GM12878 (cell line): ENCODE measurements at regions of chr1 and their contacts with region 1.

Region 1: GRCh38 chr1:62725255-62725654 is 37.1 kb upstream of the DOCK7 start:
- DNase-seq: peak; percentile 19
- ATAC-seq: peak; percentile 42
- H3K4me3 ChIP-seq: 0 out of 2 replicates have a peak overlapping the region, but pooled peaks have one; percentile 7
- H3K27ac ChIP-seq: no peak overlapping the region
- H3K4me1 ChIP-seq: 0 out of 2 replicates have a peak, but pooled peaks cover 5% of the 10 kb centered on the region
- H3K27me3 ChIP-seq: no peaks in the 10 kb centered on the region
- CTCF ChIP-seq: no peak
- EP300 ChIP-seq: no peak
- POLR2A ChIP-seq: no peak
- RAD21 ChIP-seq: no peak

Region 2: DNA sequence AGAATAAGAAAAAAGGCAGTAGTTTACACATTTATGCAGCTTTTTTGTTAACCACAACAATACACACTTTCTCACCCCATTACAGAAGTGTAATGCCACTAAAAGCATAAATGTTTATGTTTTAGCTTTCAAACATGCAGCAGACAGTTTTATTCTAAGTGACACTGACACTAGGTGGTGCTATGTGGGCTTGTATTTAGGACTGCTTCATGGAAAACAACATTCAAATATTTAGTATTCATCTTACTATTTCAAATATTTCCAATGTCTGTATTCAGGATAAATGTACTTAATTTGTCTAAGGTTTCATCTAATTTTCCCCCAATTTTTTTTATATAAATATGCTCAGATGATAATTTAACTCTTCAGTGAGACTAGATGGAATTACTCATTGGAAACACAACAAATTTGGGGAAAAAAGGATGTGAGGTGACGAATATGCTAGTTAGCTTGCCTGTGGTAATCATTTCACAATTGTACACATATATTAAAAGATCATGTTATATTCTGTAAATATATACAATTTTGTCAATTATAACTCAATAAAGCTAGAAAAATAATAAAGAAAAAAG is 217.0 kb before region 1 on chr1:
- CTCF ChIA-PET with region 1: interaction called, 6 read pairs
- POLR2A ChIA-PET with region 1: no interaction called
- RAD21 ChIA-PET with region 1: interaction called, 12 read pairs
- SMC1A ChIA-PET with region 1: interaction called, 9 read pairs
- in situ Hi-C with region 1: no loop called
- intact Hi-C with region 1: no loop called
- DNase-seq: peak; percentile 9
- ATAC-seq: peak; percentile 68
- H3K4me3 ChIP-seq: no peak overlapping the region
- H3K27ac ChIP-seq: no peak overlapping the region
- H3K4me1 ChIP-seq: no peaks in the 10 kb centered on the region
- H3K27me3 ChIP-seq: no peaks in the 10 kb centered on the region
- CTCF ChIP-seq: peak; percentile 58 to 68 (median 60)
- EP300 ChIP-seq: no peak
- POLR2A ChIP-seq: no peak
- RAD21 ChIP-seq: peak; percentile 88

Region 3: DNA sequence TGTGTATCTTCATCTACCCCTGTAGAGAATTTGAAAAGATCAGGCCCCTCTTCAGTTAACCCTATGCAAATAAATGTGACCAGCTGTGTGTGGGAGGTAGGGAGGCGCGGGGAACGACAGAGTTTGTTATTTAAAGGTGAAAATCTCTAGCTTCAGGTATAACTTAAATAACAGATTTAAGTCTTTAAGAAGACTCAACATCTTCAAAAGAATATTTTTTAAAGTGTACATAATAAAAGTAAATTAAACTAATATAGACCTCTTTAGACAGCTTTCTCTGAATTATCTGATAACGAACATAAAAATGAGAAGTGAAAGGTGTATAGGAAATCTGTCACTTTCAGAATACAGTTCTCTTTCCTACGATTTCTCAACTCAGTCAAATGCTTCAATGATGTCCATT is 111.9 kb before region 1 on chr1:
- CTCF ChIA-PET with region 1: interaction called, 3 read pairs
- POLR2A ChIA-PET with region 1: no interaction called
- RAD21 ChIA-PET with region 1: interaction called, 9 read pairs
- SMC1A ChIA-PET with region 1: interaction called, 24 read pairs
- in situ Hi-C with region 1: no loop called
- intact Hi-C with region 1: no loop called
- DNase-seq: peak; percentile 27
- ATAC-seq: peak; percentile 98
- H3K4me3 ChIP-seq: 0 out of 2 replicates have a peak overlapping the region, but pooled peaks have one; percentile 4
- H3K27ac ChIP-seq: peak overlapping the region; percentile 66
- H3K4me1 ChIP-seq: peaks cover 11% of the 10 kb centered on the region
- H3K27me3 ChIP-seq: no peaks in the 10 kb centered on the region
- CTCF ChIP-seq: no peak
- EP300 ChIP-seq: peak; percentile 31 to 75; a peak in 3 of 4 replicates
- POLR2A ChIP-seq: no peak
- RAD21 ChIP-seq: no peak

Region 4: DNA sequence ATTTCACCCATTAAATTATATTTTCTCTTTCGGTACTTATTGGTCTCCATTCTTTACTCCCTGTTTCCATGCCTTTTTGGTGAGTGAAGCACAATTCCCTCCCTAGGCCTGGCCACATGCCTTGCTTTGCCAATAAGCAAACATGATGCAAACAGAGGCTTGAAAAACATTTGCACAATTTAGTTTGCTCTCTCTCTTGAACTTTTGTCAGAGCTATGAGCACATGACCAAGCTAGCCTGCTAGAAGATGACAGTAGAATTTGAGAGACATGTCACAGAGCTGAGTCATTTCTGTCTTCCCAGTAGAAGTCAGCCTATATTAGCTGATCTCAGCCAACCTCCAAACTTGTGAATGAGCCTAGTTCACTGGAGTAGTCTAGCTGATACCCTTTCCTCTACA is 103.3 kb before region 1 on chr1:
- CTCF ChIA-PET with region 1: interaction called, 8 read pairs
- POLR2A ChIA-PET with region 1: interaction called, 5 read pairs
- RAD21 ChIA-PET with region 1: interaction called, 9 read pairs
- SMC1A ChIA-PET with region 1: interaction called, 17 read pairs
- in situ Hi-C with region 1: no loop called
- intact Hi-C with region 1: no loop called
- DNase-seq: peak; percentile 60
- ATAC-seq: peak; percentile 94
- H3K4me3 ChIP-seq: no peak overlapping the region
- H3K27ac ChIP-seq: no peak overlapping the region
- H3K4me1 ChIP-seq: no peaks in the 10 kb centered on the region; the same call in 1 of the 2 replicates
- H3K27me3 ChIP-seq: no peaks in the 10 kb centered on the region
- CTCF ChIP-seq: no peak
- EP300 ChIP-seq: peak; percentile 46 to 55; a peak in 2 of 4 replicates
- POLR2A ChIP-seq: no peak
- RAD21 ChIP-seq: no peak

Region 5: DNA sequence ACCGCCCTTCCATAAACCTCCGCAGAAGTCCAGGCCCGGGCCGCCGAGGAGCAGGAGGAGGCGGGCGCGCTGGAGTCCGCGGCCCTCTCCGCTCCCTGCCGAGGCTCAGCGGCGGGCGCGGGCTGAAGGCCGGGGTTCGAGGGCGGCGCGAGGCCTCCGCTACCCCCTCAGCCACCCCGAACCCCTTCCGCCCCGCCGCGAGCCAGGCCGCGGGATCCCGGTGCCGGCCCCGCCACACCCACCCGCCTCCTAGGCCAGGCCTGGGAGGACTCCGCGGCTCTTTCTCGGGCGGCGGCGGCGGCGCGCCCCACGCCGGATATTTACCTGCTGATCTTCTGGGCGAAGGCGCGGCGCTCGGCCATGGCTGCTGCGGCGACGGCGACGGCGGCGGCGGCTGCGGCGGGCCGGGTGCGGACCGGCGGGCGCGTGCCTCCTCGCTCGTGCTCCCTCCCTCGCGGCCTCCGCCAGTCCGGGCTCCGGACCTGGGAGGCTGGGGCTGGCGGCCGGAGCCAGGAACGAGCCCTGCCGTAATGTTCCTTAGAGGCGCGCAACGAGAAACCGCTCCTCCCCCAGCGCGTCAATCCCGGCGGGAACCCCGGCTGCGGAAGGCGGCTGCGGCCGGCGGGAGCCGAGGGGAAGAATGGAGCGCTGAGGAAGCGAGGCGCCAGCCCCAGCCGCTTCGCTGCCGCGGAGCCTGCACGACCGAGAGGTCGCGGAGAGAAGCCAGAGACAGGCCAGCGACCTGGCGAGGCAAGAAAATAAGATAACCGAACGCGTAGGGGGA is 37.2 kb before region 1 on chr1 and contains the start of gene DOCK7:
- CTCF ChIA-PET with region 1: interaction called, 4 read pairs
- POLR2A ChIA-PET with region 1: no interaction called
- RAD21 ChIA-PET with region 1: interaction called, 10 read pairs
- SMC1A ChIA-PET with region 1: interaction called, 23 read pairs
- in situ Hi-C with region 1: no loop called
- intact Hi-C with region 1: no loop called
- DNase-seq: no peak
- ATAC-seq: peak; percentile 77
- H3K4me3 ChIP-seq: peak within 1 kb of the TSS; percentile 87
- H3K27ac ChIP-seq: peak within 1 kb of the TSS; percentile 83
- H3K4me1 ChIP-seq: peaks cover 4% of the 10 kb centered on the region; the same call in 1 of the 2 replicates
- H3K27me3 ChIP-seq: no peaks in the 10 kb centered on the region
- CTCF ChIP-seq: no peak
- EP300 ChIP-seq: no peak
- POLR2A ChIP-seq: peak; percentile 77
- RAD21 ChIP-seq: no peak
- polyA plus RNA-seq, gene DOCK7: 4.8 to 7.0 TPM